ENCODE measurements at regions of chr2 and their contacts with region 1.

Region 1: DNA sequence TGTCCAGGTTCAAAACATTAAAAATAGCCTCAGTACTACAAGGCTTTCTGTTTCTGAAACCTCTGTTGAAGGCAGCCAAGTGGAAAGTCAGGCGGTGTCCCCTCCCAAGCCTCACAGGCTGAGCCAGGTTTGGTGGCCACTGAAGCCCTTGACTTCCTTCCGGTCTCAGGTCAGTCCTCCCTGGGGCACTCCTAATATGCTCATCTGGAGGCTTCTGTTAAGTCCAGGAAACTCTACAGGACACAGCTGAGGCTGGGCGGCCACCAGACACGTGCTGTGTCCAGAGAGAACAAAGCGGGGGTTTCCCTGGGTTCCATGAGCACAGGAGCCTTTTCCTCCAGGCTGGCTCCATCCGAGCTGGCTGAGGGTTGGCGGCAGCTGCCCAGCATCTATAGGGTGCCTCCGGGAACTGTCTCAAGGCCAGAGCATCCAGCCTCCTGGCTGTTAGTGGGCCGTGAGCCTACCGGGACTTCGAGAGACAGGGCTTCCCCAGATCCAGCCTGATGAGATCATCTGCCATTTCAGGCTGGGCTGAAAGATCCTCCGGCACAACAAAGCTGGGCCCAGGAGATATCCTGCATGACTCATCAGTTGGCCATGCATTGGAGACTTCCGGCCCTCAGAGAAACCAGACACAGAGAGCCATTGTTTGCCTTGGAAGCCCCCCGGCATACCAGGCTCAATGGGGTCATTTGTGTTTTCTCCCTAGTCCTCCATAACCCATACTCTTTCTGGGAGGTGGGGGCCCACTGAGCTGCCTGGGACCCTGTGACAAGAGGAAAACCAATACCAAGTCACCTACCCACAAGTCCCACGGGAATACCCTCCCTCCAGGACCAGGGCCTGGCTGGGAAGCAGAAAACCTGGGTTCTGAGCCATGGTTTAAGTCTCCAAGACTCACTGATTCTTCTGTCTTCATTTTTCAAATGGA is 71.7 kb downstream of the HS1BP3 start:
- DNase-seq: peak; percentile 100
- H3K4me3 ChIP-seq: no peak overlapping the region
- H3K27ac ChIP-seq: peak overlapping the region; percentile 100
- H3K4me1 ChIP-seq: peaks cover 84% of the 10 kb centered on the region
- H3K27me3 ChIP-seq: no peaks in the 10 kb centered on the region
- CTCF ChIP-seq: no peak
- POLR2A ChIP-seq: no peak

Region 2: DNA sequence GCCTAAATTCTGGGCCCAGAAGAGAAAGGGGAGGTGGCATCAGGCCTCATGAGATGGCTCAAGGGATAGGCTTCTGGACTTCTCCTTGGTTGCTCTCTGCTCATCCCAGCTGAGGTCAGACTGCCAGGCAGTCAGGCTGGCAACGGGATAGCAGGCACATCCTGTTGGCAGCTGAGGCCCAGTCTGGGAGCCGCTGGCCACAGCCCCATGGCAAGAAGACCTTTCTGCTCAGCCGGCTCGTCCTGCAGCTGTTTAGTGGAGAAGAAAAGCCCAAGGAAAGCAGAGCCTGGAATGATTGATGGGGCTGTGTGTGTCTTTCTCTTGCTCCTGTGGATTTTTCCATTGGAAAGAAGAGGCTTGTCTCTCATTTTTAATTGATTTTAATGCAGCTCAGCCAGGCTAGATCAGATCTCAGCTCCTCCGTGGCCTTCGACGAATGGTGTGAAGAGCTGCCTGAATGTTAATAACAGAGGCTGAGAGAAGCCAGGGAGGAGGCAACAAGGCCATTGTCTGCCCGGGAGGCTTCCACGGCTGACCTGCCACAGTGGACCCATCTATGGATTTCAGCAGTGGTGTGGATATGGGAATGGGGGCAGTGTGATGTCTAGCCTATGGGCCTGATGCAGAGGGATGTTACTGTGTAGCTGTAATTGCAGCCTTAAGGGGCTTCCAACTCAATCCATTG is 27.8 kb before region 1 on chr2:
- CTCF ChIA-PET with region 1: no interaction called
- POLR2A ChIA-PET with region 1: no interaction called
- dilution Hi-C with region 1: no loop called
- intact Hi-C with region 1: no loop called
- DNase-seq: peak; percentile 60
- H3K4me3 ChIP-seq: no peak overlapping the region
- H3K27ac ChIP-seq: no peak overlapping the region
- H3K4me1 ChIP-seq: no peaks in the 10 kb centered on the region
- H3K27me3 ChIP-seq: no peaks in the 10 kb centered on the region
- CTCF ChIP-seq: no peak
- POLR2A ChIP-seq: no peak

Region 3: GRCh38 chr2:20561701-20562454 is 17.3 kb before region 1 on chr2:
- CTCF ChIA-PET with region 1: interaction called, 10 read pairs
- POLR2A ChIA-PET with region 1: interaction called, 4 read pairs
- dilution Hi-C with region 1: no loop called
- intact Hi-C with region 1: no loop called
- DNase-seq: peak; percentile 58
- H3K4me3 ChIP-seq: no peak overlapping the region
- H3K27ac ChIP-seq: no peak overlapping the region
- H3K4me1 ChIP-seq: peaks cover 12% of the 10 kb centered on the region
- H3K27me3 ChIP-seq: no peaks in the 10 kb centered on the region
- CTCF ChIP-seq: no peak
- POLR2A ChIP-seq: no peak

Region 4: DNA sequence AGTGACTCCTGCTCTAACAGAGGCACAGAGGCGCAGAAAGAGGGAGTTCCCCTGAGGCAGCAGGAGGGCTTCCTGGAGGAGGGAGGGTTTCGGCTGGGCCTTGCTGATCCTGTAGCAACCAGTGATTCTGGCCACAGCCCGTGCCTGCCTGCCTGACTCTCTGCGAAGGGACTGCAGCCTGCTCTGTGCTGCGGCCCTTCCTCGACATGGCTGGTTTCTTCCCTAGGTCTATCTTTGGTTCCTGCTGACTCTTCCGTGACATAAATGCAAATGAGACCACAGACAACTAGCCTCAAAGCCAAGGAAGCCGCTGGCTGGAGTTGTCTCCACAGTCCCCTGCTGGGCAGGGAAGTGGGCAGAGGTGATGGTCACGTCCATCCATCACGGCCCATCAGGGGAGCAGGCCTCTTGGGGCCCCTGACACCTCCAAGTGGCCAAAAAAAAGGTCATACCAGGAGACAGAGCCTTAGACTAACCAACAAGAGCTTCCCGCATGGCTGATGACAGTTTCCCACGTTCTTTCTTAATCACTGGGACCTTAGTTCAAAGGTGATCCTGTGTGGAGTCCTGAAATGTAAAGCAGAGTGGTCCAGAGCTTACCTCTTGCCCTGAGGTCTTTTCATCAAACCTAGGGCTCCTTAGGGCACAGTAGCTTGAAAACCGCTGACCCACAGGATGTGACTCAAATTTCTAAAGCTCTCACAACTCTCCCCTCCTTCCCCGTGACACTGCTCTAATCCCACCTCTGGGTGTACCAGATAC is 16.5 kb after region 1 on chr2:
- CTCF ChIA-PET with region 1: interaction called, 23 read pairs
- POLR2A ChIA-PET with region 1: interaction called, 16 read pairs
- dilution Hi-C with region 1: no loop called
- intact Hi-C with region 1: loop called (anchors 1 kb)
- DNase-seq: peak; percentile 65
- H3K4me3 ChIP-seq: no peak overlapping the region
- H3K27ac ChIP-seq: peak overlapping the region; percentile 95
- H3K4me1 ChIP-seq: peaks cover 56% of the 10 kb centered on the region
- H3K27me3 ChIP-seq: no peaks in the 10 kb centered on the region
- CTCF ChIP-seq: no peak
- POLR2A ChIP-seq: peak; percentile 43

Region 5: GRCh38 chr2:20611077-20611843 is 32.1 kb after region 1 on chr2:
- CTCF ChIA-PET with region 1: no interaction called
- POLR2A ChIA-PET with region 1: interaction called, 3 read pairs
- dilution Hi-C with region 1: no loop called
- intact Hi-C with region 1: loop called (anchors 1 kb)
- DNase-seq: peak; percentile 99
- H3K4me3 ChIP-seq: no peak overlapping the region
- H3K27ac ChIP-seq: peak overlapping the region; percentile 69
- H3K4me1 ChIP-seq: peaks cover 28% of the 10 kb centered on the region
- H3K27me3 ChIP-seq: no peaks in the 10 kb centered on the region
- CTCF ChIP-seq: no peak
- POLR2A ChIP-seq: no peak

Measured in endothelial cell of umbilical vein (primary cell).